Ascending aorta (tissue), 2 donors: ENCODE measurements at regions of chr19 and their contacts with region 1.

Region 1: DNA sequence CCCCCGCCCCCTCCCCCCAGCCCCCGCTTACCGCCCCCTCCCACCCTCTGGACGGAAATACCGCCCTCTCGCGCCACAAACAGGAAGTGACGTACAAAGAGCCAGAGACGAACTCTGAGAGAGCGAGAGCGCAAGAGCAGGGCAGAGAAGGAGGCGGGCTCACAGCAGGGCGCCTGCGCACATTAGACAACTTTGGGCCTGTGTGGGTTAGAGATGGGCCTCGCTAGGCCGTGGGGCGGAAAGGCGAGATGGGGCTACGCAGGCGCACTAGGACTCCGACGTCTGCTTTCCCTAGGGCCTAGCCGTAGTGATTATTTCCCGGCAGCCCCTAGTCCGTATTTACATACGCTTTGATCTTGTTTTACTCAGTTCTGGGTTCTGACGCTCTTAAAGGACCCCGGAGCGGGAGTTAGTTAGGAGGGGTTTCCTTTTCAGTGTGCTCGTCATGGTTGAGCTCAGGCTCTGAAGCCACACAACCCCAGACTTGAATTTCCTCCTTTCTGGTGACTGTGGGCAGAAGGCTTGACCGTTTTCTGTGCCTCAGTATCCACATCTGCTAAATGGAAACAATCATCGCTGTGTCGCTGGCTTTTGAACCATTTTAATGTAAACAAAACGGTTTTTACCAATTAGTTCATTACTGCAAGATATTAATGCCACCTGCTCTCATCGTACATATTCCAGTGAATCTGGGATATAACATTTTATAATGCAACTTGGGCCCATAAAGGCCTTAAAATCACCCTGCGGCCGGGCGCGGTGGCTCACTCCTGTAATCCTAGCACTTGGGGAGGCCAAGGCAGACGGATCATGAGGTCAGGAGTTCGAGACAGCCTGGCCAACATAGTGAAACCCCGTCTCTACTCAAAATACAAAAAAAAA is 449 bp upstream of the AKT2 start:
- DNase-seq: peak; percentile 97 to 99
- H3K4me3 ChIP-seq: peak overlapping the region; percentile 71 to 83
- H3K27ac ChIP-seq: peak overlapping the region; percentile 84 to 97
- H3K4me1 ChIP-seq: peaks cover 6 to 25% of the 10 kb centered on the region in 2 donors
- H3K27me3 ChIP-seq: no peaks in the 10 kb centered on the region
- CTCF ChIP-seq: no peak

Region 2: GRCh38 chr19:39970675-39971379 is 314.8 kb before region 1 on chr19 and contains the start of gene PSMC4:
- intact Hi-C with region 1: loop called (anchors 10 kb)
- DNase-seq: peak; percentile 95 to 99
- H3K4me3 ChIP-seq: peak within 1 kb of the TSS; percentile 75 to 76
- H3K27ac ChIP-seq: peak within 1 kb of the TSS; percentile 86 to 90
- H3K4me1 ChIP-seq: peaks cover 0 to 14% of the 10 kb centered on the region in 2 donors
- H3K27me3 ChIP-seq: no peaks in the 10 kb centered on the region
- CTCF ChIP-seq: peak; percentile 66 to 78 (median 75)
- total RNA-seq, gene PSMC4: 122 TPM

Region 3: DNA sequence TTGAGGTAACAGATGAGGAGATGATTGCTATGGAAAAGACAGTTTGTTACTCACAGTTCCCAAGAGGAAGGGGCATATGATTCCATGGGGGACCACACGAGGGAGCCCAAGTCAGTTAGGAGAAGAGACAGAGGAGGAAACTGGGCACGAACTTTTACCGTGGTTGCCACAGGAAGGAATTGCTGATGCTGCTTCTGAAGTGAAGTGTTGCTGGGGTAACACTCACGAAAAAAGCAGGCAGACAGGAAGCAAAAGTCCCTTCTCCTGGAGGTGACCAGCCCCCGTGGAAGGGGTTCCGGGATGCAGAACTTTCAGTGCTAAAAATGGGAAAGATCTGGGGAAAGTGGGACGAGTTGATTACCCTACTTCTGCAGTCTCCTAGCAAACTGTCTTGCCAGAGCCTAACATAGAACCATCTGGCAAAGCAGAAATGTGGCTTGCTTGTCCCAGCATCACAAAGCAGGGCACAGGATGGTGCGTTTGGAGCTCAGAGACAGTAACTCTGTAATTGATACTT is 129.8 kb before region 1 on chr19:
- intact Hi-C with region 1: no loop called
- DNase-seq: no peak
- H3K4me3 ChIP-seq: no peak overlapping the region
- H3K27ac ChIP-seq: no peak overlapping the region
- H3K4me1 ChIP-seq: no peaks in the 10 kb centered on the region
- H3K27me3 ChIP-seq: no peaks in the 10 kb centered on the region
- CTCF ChIP-seq: peak in 1 of 3 experiments; percentile 3

Region 4: GRCh38 chr19:40322871-40323615 is 37.4 kb after region 1 on chr19:
- intact Hi-C with region 1: no loop called
- DNase-seq: no peak
- H3K4me3 ChIP-seq: no peak overlapping the region
- H3K27ac ChIP-seq: no peak overlapping the region
- H3K4me1 ChIP-seq: no peaks in the 10 kb centered on the region
- H3K27me3 ChIP-seq: no peaks in the 10 kb centered on the region
- CTCF ChIP-seq: no peak

Region 5: DNA sequence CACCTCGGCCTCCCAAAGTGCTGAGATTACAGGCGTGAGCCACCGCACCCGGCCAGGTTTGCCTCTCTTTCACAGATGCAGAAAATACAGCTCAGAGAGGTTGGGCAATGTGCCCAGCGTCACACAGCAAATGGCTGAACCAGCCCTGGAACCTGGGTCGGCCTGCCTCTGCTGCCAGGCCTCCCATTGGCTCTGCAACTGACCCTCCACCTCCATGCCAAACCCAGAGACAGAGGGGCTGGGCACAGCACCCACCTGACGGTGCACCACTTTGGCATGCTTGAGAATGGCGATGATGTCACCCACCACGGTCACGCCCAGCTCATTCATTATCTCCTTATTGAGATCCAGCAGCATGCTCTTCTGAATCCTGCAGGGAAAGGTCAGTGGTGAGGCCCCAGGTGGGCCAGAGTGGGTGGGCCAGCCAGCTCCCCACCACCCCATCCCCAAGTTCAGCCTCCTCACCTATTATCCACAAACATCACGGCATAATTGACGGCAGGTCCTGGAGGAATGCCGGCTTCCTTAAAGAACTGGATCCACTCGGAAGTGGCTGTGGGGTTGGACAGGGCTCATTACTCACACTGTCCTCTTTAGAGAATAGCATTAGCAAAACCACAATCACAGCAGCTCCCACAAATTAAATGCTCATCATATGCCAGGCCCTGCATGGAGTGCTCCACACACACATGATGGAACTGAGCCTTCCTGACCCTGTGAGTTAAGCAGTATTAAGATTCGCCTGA is 50.4 kb after region 1 on chr19:
- intact Hi-C with region 1: no loop called
- DNase-seq: no peak
- H3K4me3 ChIP-seq: no peak overlapping the region
- H3K27ac ChIP-seq: no peak overlapping the region
- H3K4me1 ChIP-seq: peaks cover 0 to 6% of the 10 kb centered on the region in 2 donors
- H3K27me3 ChIP-seq: no peaks in the 10 kb centered on the region
- CTCF ChIP-seq: no peak

Region 6: DNA sequence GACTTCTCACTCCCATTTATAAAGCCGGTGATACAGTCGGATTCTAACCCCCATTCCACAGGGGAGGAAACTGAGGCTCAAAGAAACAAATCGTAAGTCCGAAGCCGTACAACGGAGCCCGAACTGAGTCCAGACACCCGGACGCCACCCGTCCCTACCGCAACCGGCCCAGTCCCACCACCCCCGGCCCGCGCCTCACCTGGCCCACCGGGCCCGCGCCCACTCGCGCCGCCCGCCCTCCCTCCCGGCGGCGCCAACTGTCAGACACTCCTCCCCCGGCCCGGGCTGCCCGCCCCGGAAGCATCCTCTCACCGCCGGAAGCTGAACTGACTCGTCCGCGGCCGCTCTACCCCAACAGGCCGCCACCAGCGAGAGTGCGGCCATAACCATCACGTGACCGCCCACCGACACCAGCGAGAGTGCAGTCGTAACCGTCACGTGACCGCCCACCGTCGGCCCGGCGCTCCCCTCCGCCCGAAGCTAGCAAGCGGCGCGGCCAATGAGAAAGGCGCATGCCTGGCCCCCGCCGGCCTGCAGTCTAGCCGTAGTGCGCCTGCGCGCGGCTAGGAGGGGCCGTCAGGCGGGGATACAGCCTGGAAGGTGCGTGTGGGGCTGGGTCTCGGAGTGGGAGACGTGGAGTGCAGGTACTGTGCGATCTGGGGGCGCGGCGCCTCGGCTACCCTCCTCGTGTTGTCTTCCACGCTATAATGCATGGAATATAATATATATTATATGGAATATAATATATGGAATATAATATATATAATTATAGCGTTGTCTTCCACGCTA is 62.7 kb after region 1 on chr19 and contains the starts of genes C19orf47 and PLD3:
- intact Hi-C with region 1: loop called (anchors 2 kb)
- DNase-seq: peak; percentile 99 to 100
- H3K4me3 ChIP-seq: peak within 1 kb of the TSS; percentile 80 to 94
- H3K27ac ChIP-seq: peak within 1 kb of the TSS; percentile 51 to 85
- H3K4me1 ChIP-seq: peaks cover 4 to 10% of the 10 kb centered on the region in 2 donors
- H3K27me3 ChIP-seq: no peaks in the 10 kb centered on the region
- CTCF ChIP-seq: no peak
- total RNA-seq, gene C19orf47: 10.4 TPM
- total RNA-seq, gene PLD3: 345 TPM

Region 7: DNA sequence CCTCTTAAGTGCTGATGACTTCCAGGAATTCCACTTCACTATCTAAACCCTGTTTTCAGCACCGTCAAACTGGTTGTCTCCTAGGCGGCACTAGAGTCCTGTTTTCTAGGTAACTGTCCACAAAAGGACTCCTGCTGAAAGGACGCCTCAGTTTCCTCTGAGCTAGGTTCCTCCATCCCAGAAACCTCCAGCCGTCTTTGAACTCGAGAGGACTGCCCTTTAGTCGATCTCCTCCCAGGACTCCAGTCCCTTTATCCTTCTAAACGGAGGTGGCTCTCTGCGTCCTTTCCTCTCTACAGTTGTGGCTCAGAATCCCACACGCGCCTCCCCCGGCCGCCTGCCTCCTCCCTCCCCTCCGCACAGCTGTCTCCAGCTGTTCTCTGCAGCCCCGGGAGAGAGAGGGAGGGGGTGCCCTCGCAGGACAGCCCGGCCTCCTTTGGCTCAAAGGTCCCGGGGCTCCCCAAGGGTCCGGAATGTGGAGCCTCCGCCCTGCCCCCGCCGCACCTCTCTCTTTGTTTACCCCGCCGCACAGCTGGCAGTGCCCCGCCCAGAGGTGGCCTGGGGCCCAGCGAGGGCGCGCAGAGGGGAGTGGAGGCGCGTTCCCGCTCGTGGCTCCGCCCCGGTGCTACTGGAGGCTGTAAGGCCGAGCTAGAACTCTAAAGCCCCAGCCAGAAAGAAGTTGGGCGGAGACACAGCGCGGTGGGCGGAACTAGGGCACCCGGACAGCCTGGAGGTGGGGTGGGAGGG is 318.0 kb after region 1 on chr19:
- intact Hi-C with region 1: loop called (anchors 10 kb)
- DNase-seq: peak; percentile 96 to 99
- H3K4me3 ChIP-seq: peak overlapping the region; percentile 75 to 92
- H3K27ac ChIP-seq: peak overlapping the region; percentile 88 to 95
- H3K4me1 ChIP-seq: peaks cover 11 to 44% of the 10 kb centered on the region in 2 donors
- H3K27me3 ChIP-seq: no peaks in the 10 kb centered on the region
- CTCF ChIP-seq: no peak

Region 8: GRCh38 chr19:41263850-41264580 is 978.4 kb after region 1 on chr19 and contains the start of gene HNRNPUL1:
- intact Hi-C with region 1: loop called (anchors 10 kb)
- DNase-seq: peak; percentile 97 to 99
- H3K4me3 ChIP-seq: peak within 1 kb of the TSS; percentile 81 to 82
- H3K27ac ChIP-seq: peak within 1 kb of the TSS; percentile 94 to 98
- H3K4me1 ChIP-seq: peaks cover 9 to 22% of the 10 kb centered on the region in 2 donors
- H3K27me3 ChIP-seq: no peaks in the 10 kb centered on the region
- CTCF ChIP-seq: peak; percentile 25 to 44 (median 40)
- total RNA-seq, gene HNRNPUL1: 81.1 TPM